ENCODE measurements at regions of chr3 and their contacts with region 1.

Region 1: GRCh38 chr3:50519471-50520089 is 16.1 kb upstream of the CACNA2D2 start:
- DNase-seq: peak; percentile 74
- ATAC-seq: peak; percentile 58
- H3K4me3 ChIP-seq: no peak overlapping the region
- H3K4me3 Mint-ChIP-seq: no peak overlapping the region
- H3K27ac ChIP-seq: no peak overlapping the region
- H3K27ac Mint-ChIP-seq: peak overlapping the region; percentile 33
- H3K4me1 ChIP-seq: peaks cover 26 to 34% of the 10 kb centered on the region in 2 donors
- H3K4me1 Mint-ChIP-seq: peaks cover 32% of the 10 kb centered on the region
- H3K27me3 ChIP-seq: peaks cover 0 to 4% (median 0%) of the 10 kb centered on the region in 4 experiments
- H3K27me3 Mint-ChIP-seq: peaks cover 5% of the 10 kb centered on the region
- CTCF ChIP-seq: peak; percentile 89

Region 2: DNA sequence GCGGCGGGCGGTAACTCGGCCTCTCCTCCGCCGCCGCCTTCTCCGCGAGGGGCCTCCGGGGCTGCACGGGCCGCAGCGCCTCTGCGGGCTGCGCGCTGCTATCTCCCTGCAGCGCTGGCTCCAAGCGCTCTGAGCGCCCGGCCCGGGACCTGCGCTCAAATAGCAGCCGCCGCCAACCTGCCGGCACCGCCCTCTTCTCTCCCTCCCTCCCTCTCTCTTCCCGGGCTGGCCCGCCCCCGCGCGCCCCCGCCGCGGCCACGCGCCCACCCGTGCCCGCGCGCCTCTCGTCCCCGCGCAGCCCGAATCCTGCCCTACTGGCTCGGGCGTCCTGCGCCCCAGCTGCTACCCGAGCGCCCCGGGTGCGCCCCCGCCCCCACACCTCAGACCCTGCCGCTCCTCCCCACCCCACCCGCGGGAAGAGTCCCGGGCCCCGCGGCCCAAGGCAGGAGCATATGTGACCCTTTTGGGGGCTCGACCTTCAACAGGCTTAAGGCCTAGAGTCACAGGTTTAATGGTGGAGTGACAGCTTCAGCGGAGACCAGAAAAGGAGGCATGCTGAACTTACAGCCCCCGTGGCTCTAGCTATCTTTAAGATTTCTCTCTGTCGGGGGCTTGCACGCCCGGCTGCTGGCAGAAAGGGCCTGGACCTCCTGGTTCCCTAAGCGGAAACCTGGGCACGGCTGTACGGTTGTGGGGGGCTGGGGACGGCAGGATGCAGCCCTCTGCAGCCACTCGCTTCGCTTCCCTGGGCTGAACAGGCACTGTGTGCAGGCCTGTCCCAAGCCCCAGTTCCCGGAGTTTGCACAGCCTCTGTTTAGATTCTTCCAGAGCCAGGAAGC is 15.9 kb before region 1 on chr3 and contains the start of gene CACNA2D2:
- CTCF ChIA-PET with region 1: interaction called, 3 read pairs
- POLR2A ChIA-PET with region 1: interaction called, 3 read pairs
- intact Hi-C with region 1: loop called (anchors 1 kb)
- DNase-seq: peak; percentile 75
- ATAC-seq: peak; percentile 83
- H3K4me3 ChIP-seq: peak within 1 kb of the TSS in 3 of 5 experiments; percentile 41 to 59 (median 48)
- H3K4me3 Mint-ChIP-seq: peak within 1 kb of the TSS; percentile 81
- H3K27ac ChIP-seq: no peak within 1 kb of the TSS
- H3K27ac Mint-ChIP-seq: no peak within 1 kb of the TSS
- H3K4me1 ChIP-seq: peaks cover 15 to 16% of the 10 kb centered on the region in 2 donors
- H3K4me1 Mint-ChIP-seq: peaks cover 10% of the 10 kb centered on the region
- H3K27me3 ChIP-seq: peaks cover 0 to 34% (median 12%) of the 10 kb centered on the region in 4 experiments
- H3K27me3 Mint-ChIP-seq: peaks cover 26% of the 10 kb centered on the region
- CTCF ChIP-seq: no peak
- total RNA-seq, gene CACNA2D2: 0.85 and 1.2 TPM in 2 replicates

Region 3: GRCh38 chr3:50542177-50543034 is 22.8 kb after region 1 on chr3:
- CTCF ChIA-PET with region 1: interaction called, 24 read pairs
- POLR2A ChIA-PET with region 1: interaction called, 7 read pairs
- intact Hi-C with region 1: no loop called
- DNase-seq: peak; percentile 73
- ATAC-seq: peak; percentile 71
- H3K4me3 ChIP-seq: no peak overlapping the region
- H3K4me3 Mint-ChIP-seq: no peak overlapping the region
- H3K27ac ChIP-seq: no peak overlapping the region
- H3K27ac Mint-ChIP-seq: no peak overlapping the region
- H3K4me1 ChIP-seq: no peaks in the 10 kb centered on the region
- H3K4me1 Mint-ChIP-seq: no peaks in the 10 kb centered on the region
- H3K27me3 ChIP-seq: peaks cover 0 to 16% (median 0%) of the 10 kb centered on the region in 4 experiments
- H3K27me3 Mint-ChIP-seq: peaks cover 18% of the 10 kb centered on the region
- CTCF ChIP-seq: peak; percentile 97